ENCODE measurements at regions of chr3 and their contacts with region 1.

Region 1: DNA sequence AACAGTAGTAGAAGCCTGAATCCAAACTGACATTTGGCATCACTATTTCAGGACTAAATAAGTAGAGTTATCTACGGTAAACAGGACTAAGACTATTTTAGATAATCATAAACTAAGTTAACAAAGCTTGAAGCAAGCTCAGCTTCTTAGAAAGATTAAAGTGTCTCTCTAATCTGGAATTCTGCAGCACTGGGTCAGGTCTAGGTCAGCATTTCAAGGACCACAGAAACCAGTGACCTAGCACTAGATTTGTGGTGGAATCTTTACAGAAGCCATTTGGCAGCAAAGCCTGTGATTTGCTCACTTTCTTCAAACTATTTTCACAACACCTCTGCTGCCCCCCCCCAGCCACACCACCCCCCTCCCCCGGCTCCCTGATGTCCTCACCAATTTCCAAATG is 37.5 kb downstream of the IGSF11 start:
- DNase-seq: no peak
- H3K4me3 ChIP-seq: no peak overlapping the region
- H3K4me3 Mint-ChIP-seq: no peak overlapping the region
- H3K27ac Mint-ChIP-seq: no peak overlapping the region
- H3K4me1 ChIP-seq: peaks cover 4% of the 10 kb centered on the region; the same call in 1 of the 2 replicates
- H3K4me1 Mint-ChIP-seq: no peaks in the 10 kb centered on the region
- H3K27me3 ChIP-seq: no peaks in the 10 kb centered on the region
- H3K27me3 Mint-ChIP-seq: no peaks in the 10 kb centered on the region
- CTCF ChIP-seq: no peak

Region 2: GRCh38 chr3:118863731-118864322 is 133.4 kb before region 1 on chr3:
- CTCF ChIA-PET with region 1: no interaction called
- POLR2A ChIA-PET with region 1: no interaction called
- intact Hi-C with region 1: no loop called
- DNase-seq: peak in 1 of 2 experiments; percentile 14
- H3K4me3 ChIP-seq: no peak overlapping the region
- H3K4me3 Mint-ChIP-seq: no peak overlapping the region
- H3K27ac Mint-ChIP-seq: no peak overlapping the region
- H3K4me1 ChIP-seq: no peaks in the 10 kb centered on the region
- H3K4me1 Mint-ChIP-seq: no peaks in the 10 kb centered on the region
- H3K27me3 ChIP-seq: no peaks in the 10 kb centered on the region
- H3K27me3 Mint-ChIP-seq: no peaks in the 10 kb centered on the region
- CTCF ChIP-seq: peak; percentile 21 to 26

Region 3: GRCh38 chr3:118938183-118938961 is 58.8 kb before region 1 on chr3:
- CTCF ChIA-PET with region 1: no interaction called
- POLR2A ChIA-PET with region 1: no interaction called
- intact Hi-C with region 1: loop called (anchors 2 kb)
- DNase-seq: no peak
- H3K4me3 ChIP-seq: no peak overlapping the region
- H3K4me3 Mint-ChIP-seq: peak overlapping the region; percentile 38
- H3K27ac Mint-ChIP-seq: peak overlapping the region; percentile 12
- H3K4me1 ChIP-seq: peaks cover 5% of the 10 kb centered on the region; the same call in 1 of the 2 replicates
- H3K4me1 Mint-ChIP-seq: peaks cover 10% of the 10 kb centered on the region
- H3K27me3 ChIP-seq: no peaks in the 10 kb centered on the region
- H3K27me3 Mint-ChIP-seq: peaks cover 3% of the 10 kb centered on the region
- CTCF ChIP-seq: no peak

Measured in Caco-2 (cell line).